AG04450 (cell line): ENCODE measurements at regions of chr16 and their contacts with region 1.

Region 1: DNA sequence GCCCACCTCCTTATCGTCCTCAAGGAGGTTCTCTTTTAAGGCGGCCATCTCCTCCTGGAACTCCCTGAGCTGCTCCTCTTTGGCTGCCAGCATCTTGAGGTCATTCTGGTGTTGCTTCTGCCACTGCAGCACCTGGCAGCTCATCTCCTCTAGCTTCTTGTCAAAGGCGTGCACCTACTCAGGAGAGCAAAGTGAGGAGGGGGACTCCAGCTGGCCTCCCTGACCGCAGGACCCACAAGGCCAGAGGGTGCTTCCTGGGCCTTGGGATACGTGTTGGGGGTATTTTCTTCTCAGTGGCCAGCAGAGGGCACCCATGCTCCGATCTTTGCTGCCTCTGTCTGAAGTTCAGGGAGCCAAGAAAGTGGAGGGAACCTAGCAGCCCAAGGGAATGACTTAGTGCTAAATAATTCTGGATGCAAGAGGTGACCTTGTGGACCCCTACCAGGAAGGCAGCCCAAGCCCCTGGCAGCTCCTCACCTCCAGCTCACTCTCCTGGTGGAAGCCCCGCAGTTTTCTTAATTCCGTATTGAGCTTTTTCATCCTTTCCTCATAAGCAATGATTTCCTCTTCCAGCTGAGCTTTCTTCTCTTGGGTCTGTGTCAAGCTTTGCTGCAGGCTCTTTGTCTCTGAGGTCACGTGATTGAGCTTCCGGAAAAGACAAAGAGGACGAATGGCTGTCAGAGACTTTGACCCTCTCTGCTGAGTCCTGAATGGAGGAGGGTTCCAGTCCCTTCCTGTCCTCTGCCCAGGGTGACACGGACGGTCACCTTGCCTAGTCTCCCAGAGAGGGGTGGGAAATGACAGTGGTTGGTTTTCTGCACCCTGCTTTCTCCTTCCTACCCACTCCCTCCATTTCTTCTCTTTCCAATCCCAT is 31.4 kb downstream of the DHX38 start:
- DNase-seq: peak; percentile 34
- H3K4me3 ChIP-seq: no peak overlapping the region
- H3K27ac ChIP-seq: no peak overlapping the region
- H3K27me3 ChIP-seq: peaks cover 8% of the 10 kb centered on the region
- CTCF ChIP-seq: peak; percentile 86

Region 2: DNA sequence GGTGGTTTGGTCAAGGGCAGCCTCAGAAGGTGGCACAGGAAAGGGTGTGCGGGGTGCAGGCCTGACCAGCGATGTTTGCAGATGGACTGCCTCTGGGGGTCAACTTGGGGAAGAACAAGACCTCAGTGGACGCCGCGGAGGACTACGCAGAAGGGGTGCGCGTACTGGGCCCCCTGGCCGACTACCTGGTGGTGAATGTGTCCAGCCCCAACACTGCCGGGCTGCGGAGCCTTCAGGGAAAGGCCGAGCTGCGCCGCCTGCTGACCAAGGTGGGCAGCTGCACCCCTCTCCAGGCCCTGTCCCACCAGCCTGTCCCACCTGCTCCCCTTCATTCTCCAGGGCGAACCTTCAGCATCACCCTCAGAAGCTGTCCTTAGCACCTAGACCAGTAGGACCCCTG is 104.0 kb before region 1 on chr16:
- CTCF ChIA-PET with region 1: no interaction called
- POLR2A ChIA-PET with region 1: no interaction called
- DNase-seq: no peak
- H3K4me3 ChIP-seq: no peak overlapping the region
- H3K27ac ChIP-seq: no peak overlapping the region
- H3K27me3 ChIP-seq: no peaks in the 10 kb centered on the region
- CTCF ChIP-seq: peak; percentile 47

Region 3: GRCh38 chr16:72093448-72094265 is 31.3 kb before region 1 on chr16 and contains the starts of genes DHX38 and TXNL4B:
- CTCF ChIA-PET with region 1: interaction called, 11 read pairs
- POLR2A ChIA-PET with region 1: no interaction called
- DNase-seq: peak; percentile 97
- H3K4me3 ChIP-seq: peak within 1 kb of the TSS; percentile 98
- H3K27ac ChIP-seq: peak within 1 kb of the TSS; percentile 77
- H3K27me3 ChIP-seq: no peaks in the 10 kb centered on the region
- CTCF ChIP-seq: peak; percentile 2; the same call in 1 of the 2 replicates
- polyA plus RNA-seq, gene DHX38: 26.8 and 31.1 TPM in 2 replicates
- polyA plus RNA-seq, gene TXNL4B: 11.3 and 21.3 TPM in 2 replicates

Region 4: GRCh38 chr16:72112906-72113615 is 11.9 kb before region 1 on chr16:
- CTCF ChIA-PET with region 1: interaction called, 13 read pairs
- POLR2A ChIA-PET with region 1: no interaction called
- DNase-seq: no peak
- H3K4me3 ChIP-seq: no peak overlapping the region
- H3K27ac ChIP-seq: no peak overlapping the region
- H3K27me3 ChIP-seq: no peaks in the 10 kb centered on the region
- CTCF ChIP-seq: no peak